Dorsolateral prefrontal cortex (tissue), 120 donors: ENCODE measurements at regions of chr7 and their contacts with region 1.

Region 1: DNA sequence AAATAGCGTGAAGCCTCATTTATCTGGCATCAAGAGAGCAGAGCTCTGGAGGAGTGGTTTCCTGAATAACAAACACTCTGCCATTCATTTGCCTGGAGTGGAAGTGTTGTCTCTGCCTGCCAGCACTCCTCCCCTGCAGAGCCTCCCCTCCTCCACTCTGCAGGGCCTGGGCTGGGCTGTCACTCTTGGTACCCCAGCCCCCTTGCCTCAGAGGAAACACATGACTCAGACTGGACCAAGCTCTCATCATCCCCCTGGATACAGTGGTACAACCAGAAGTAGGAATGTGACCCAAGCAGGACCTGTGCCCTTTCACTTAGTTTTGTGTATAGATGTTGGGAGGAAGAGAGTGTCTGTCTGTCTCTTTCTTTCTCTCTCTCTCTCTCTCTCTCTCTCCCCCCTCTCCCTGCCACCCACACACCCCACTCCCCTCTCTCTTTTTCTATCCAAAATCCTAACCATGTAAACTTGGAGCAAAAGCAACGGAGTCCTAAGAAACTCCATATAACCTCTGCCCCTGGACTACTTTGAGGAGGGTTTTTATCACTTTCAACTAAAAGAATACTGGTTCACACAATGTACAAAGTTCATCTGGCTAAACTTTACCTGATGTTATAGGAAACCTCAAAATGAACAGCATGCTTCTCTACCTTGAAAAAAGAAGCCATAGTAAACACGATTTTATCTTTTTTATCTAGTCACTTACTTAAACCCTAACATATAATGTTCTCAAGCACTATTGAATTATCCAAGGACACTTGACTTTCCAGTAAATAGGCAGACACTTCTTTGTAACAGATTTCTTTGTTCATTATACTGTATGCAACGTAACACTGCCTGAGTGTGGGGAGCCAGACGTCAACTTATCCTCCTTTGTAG is 43.8 kb downstream of the DOCK4 start:
- DNase-seq: peak; percentile 23 to 76 (median 70)
- H3K4me3 ChIP-seq: peak overlapping the region in 12 of 59 donors; percentile 0 to 43 (median 9)
- H3K27ac ChIP-seq: peak overlapping the region; percentile 21 to 88 (median 73)
- H3K27me3 ChIP-seq: no peaks in the 10 kb centered on the region
- CTCF ChIP-seq: peak in 6 of 56 donors; percentile 10 to 41 (median 15)

Region 2: DNA sequence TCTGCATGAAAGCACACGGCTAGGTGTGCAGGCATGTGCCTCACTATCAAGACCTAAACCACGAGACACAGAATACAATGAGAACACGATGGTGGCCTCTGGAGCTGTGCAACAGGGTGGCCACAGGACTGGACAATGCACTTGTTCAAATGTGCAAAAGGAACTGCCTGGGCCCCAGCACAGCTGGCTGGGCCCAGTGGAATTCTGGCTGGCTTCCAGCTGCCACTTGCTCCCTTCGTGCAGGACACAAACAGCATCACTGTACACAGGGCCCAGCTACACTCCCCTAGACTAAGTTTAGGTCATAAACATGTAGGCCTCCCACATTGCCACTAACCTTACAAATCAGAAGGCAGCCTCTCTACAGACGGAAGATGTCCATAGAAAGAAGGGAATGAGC is 20.4 kb after region 1 on chr7:
- intact Hi-C with region 1: loop called in 1 of 2 experiments (anchors 2 kb)
- DNase-seq: peak; percentile 23 to 90 (median 84)
- H3K4me3 ChIP-seq: peak overlapping the region in 4 of 59 donors; percentile 0 to 17 (median 6)
- H3K27ac ChIP-seq: peak overlapping the region; percentile 21 to 96 (median 85)
- H3K27me3 ChIP-seq: no peaks in the 10 kb centered on the region
- CTCF ChIP-seq: peak in 4 of 56 donors; percentile 7 to 24 (median 19)

Region 3: GRCh38 chr7:112226701-112227276 is 64.4 kb after region 1 on chr7:
- intact Hi-C with region 1: no loop called
- DNase-seq: no peak
- H3K4me3 ChIP-seq: no peak overlapping the region
- H3K27ac ChIP-seq: no peak overlapping the region
- H3K27me3 ChIP-seq: no peaks in the 10 kb centered on the region
- CTCF ChIP-seq: no peak